Left colon (tissue), 2 donors: ENCODE measurements at regions of chr11 and their contacts with region 1.

Region 1: DNA sequence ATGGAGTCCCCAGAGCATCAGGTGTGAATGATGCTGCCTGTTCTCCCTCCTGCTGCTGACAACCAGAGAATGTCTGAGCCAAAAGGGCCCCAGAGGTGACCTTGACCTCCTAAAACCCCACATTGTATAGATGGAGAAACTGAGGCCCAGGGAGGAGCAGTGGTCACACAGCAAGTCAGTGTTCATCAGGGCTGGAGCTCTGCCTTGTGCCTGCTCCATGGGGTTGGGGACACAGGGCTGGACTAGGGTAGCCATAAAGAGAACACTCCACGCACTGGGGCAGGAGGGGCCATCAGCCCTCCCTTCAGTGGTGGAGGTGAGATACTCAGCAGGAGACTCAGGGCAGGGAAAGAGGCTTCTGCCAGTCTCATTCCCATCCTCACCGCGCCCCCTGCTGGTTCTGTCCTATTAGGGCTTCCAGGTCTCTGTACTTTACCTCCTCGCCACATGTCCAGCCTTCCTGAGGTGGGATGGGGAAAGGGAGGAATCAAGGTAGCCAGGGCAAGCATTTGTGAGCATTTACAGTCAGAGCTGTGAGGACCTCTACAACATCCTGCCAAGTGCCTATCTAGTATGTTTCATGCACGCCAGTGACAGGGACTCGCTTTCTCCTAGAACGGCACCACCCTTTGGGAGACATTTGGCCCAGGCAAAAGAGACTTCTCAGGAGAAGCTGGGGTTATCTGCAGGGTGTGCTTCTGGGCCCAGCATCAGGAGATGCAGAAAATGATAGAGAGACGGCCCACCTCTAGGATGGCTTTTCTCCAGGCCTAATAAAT is 43.2 kb downstream of the NEU3 start:
- DNase-seq: peak; percentile 40 to 88
- ATAC-seq: peak; percentile 86

Region 2: GRCh38 chr11:74929431-74930363 is 102.3 kb before region 1 on chr11:
- intact Hi-C with region 1: loop called in 1 of 2 experiments (anchors 5 kb)
- DNase-seq: peak; percentile 51 to 80
- ATAC-seq: peak; percentile 83